ENCODE measurements at regions of chr10 and their contacts with region 1.

Region 1: DNA sequence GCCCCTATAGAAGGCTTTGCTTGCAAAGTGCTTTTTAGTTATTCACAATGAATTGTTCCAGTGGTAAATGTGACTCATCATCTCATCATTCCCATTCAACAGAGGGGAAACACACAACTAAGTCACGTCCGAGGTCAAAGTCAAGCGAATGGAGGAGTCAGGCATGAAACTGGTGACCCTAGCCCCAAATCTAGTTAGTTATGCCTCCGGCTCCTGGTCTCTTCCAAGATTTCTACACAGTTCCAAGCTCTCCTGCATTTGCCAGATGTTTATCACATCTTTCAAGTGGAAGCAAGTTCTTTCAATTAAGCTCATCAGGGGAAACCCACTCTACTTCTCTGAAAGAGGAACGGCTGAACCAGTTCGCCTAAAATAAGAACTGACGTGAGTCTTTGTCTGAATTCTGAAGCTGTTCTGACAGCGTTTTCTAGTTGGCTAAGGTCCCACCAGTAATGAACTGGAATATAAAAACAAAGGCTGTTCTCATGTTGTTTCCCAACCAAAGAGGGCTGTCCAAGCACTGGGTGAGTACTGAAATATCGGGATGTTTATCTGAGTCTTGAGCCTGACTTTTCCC is 140.9 kb upstream of the NRBF2 start:
- DNase-seq: peak; percentile 20
- H3K4me3 Mint-ChIP-seq: peak overlapping the region; percentile 24
- H3K27ac Mint-ChIP-seq: peak overlapping the region; percentile 84
- H3K4me1 Mint-ChIP-seq: peaks cover 54% of the 10 kb centered on the region
- H3K27me3 Mint-ChIP-seq: peaks cover 7% of the 10 kb centered on the region

Region 2: GRCh38 chr10:62681211-62681940 is 310.9 kb before region 1 on chr10:
- CTCF ChIA-PET with region 1: no interaction called
- POLR2A ChIA-PET with region 1: no interaction called
- intact Hi-C with region 1: no loop called
- DNase-seq: peak; percentile 92
- H3K4me3 Mint-ChIP-seq: no peak overlapping the region
- H3K27ac Mint-ChIP-seq: peak overlapping the region; percentile 74
- H3K4me1 Mint-ChIP-seq: peaks cover 33% of the 10 kb centered on the region
- H3K27me3 Mint-ChIP-seq: peaks cover 2% of the 10 kb centered on the region

Region 3: DNA sequence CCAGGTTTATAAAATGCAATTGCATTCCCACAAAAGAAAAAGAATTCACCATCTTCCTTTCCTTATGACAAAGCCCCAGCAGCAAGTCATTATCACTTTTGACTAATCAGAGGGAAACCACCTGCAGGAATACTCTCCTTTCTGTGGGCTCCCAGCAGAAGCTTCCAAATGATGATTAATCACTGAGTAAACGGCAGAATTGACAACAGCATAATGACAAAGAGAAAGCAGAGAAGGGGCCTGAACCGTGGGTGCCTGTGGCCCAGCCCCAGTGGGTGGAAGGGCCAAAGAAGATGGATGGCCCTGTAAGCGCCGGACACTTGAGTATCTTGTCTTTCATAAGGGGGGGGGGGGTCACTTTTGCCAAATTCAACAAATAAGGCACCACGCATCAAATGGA is 11.5 kb before region 1 on chr10:
- CTCF ChIA-PET with region 1: interaction called, 3 read pairs
- POLR2A ChIA-PET with region 1: interaction called, 5 read pairs
- intact Hi-C with region 1: loop called (anchors 1 kb)
- DNase-seq: peak; percentile 56
- H3K4me3 Mint-ChIP-seq: no peak overlapping the region
- H3K27ac Mint-ChIP-seq: no peak overlapping the region
- H3K4me1 Mint-ChIP-seq: peaks cover 26% of the 10 kb centered on the region
- H3K27me3 Mint-ChIP-seq: peaks cover 11% of the 10 kb centered on the region

Region 4: DNA sequence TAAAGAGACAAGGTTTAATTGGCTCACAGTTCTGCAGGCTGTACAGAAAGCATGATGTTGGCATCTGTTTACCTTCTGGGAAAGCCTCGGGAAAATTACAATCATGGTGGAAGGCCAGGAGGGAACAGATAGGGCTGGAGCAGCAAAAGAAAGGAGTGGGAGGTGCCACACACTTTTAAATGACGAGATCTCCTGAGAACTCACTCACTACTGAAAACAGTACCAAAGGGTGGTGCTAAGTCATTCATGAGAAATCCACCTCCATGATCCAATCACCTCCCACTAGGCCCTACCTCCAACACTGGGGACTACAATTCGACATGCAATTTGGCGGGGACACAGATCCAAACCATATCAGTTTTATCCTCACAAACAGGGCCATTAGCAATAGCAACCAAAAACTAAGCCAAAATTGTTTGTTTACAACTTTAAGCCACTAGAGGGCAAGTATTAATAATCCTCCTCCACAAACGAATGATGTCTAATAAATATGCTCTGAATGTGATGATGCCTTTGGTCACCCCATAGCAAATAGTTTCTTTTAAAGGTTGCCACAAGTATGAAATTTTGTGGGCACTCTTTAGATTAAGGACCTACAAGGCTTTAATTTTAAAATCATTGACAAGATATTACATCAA is 11.7 kb after region 1 on chr10:
- CTCF ChIA-PET with region 1: interaction called, 6 read pairs
- POLR2A ChIA-PET with region 1: no interaction called
- intact Hi-C with region 1: loop called (anchors 1 kb)
- DNase-seq: no peak
- H3K4me3 Mint-ChIP-seq: no peak overlapping the region
- H3K27ac Mint-ChIP-seq: no peak overlapping the region
- H3K4me1 Mint-ChIP-seq: peaks cover 18% of the 10 kb centered on the region
- H3K27me3 Mint-ChIP-seq: peaks cover 23% of the 10 kb centered on the region

Region 5: GRCh38 chr10:63068246-63068645 is 76.0 kb after region 1 on chr10:
- CTCF ChIA-PET with region 1: no interaction called
- POLR2A ChIA-PET with region 1: interaction called, 4 read pairs
- intact Hi-C with region 1: loop called (anchors 1 kb)
- DNase-seq: peak; percentile 31
- H3K4me3 Mint-ChIP-seq: peak overlapping the region; percentile 12
- H3K27ac Mint-ChIP-seq: no peak overlapping the region
- H3K4me1 Mint-ChIP-seq: peaks cover 13% of the 10 kb centered on the region
- H3K27me3 Mint-ChIP-seq: peaks cover 51% of the 10 kb centered on the region

Region 6: GRCh38 chr10:63145782-63146181 is 153.5 kb after region 1 on chr10:
- CTCF ChIA-PET with region 1: no interaction called
- POLR2A ChIA-PET with region 1: no interaction called
- intact Hi-C with region 1: no loop called
- DNase-seq: no peak
- H3K4me3 Mint-ChIP-seq: no peak overlapping the region
- H3K27ac Mint-ChIP-seq: peak overlapping the region; percentile 38
- H3K4me1 Mint-ChIP-seq: peaks cover 44% of the 10 kb centered on the region
- H3K27me3 Mint-ChIP-seq: no peaks in the 10 kb centered on the region

Region 7: DNA sequence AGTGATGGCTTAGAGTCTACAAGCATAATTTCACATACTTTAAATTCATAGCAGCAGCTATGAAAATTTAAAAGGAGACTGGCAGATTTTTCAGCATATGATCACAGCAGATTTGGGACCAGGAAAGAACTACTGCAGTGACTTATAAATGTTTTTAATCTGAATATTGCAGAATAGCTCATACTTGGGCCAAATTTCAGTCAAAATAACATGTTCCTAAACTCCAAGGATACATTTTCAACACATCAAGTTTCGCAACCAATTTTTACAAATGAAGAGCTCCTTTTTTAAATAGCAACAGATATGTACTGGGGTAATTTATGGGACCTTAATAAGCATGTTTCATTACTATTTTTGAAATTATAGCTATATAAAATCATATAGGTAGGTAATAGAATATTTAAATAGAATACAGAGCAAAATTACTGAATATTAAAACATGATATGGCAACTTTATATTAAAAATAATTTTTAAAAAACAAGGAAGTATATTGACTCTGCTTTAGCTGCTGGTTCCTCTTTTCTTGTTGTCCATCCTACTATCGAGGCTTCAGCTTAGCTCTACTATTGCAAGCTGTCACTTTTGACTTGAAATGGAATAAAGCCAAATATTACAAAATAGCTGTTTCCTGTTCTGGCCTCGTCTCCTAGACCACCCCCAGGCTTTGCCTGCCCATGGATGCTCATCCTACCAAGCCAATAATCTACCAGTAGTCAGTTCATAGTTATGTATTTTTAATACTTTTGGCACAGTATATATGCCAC is 264.0 kb after region 1 on chr10:
- CTCF ChIA-PET with region 1: no interaction called
- POLR2A ChIA-PET with region 1: no interaction called
- intact Hi-C with region 1: no loop called
- DNase-seq: no peak
- H3K4me3 Mint-ChIP-seq: no peak overlapping the region
- H3K27ac Mint-ChIP-seq: no peak overlapping the region
- H3K4me1 Mint-ChIP-seq: peaks cover 79% of the 10 kb centered on the region
- H3K27me3 Mint-ChIP-seq: no peaks in the 10 kb centered on the region